Breast epithelium (tissue), 4 donors: ENCODE measurements at regions of chr15 and their contacts with region 1.

Region 1: DNA sequence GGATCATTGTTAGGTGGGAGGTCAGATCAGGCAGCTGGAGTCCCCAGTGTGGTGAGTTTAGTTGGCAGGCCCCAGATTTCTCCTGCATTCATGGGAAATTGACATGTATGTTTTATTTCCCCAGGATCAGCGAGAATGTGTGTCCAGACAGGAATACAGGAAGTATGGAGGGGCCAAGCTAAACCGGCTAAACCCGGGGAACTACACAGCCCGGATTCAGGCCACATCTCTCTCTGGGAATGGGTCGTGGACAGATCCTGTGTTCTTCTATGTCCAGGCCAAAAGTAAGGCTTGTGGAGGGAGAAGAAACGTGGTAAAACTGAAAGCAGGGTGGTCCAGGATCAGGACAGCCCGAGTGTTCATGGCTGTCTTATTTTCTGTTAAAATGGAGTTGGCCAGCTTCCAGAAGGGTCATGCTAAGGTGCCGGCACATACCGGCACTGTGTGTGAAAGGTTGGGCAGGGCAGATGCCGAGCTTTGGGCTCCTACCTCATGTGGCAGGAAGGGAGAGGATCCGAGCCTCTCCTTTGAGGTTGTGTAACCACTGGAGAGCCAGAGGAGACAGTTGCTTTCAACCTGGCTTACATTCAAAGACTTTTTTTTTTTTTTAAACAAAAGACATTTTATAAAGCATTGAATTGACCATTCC is 83.1 kb downstream of the PGPEP1L start:
- DNase-seq: no peak
- H3K4me3 ChIP-seq: no peak overlapping the region
- H3K27ac ChIP-seq: peak overlapping the region; percentile 74 to 75
- H3K4me1 ChIP-seq: no peaks in the 10 kb centered on the region
- H3K27me3 ChIP-seq: no peaks in the 10 kb centered on the region
- CTCF ChIP-seq: no peak
- POLR2A ChIP-seq: no peak

Region 2: DNA sequence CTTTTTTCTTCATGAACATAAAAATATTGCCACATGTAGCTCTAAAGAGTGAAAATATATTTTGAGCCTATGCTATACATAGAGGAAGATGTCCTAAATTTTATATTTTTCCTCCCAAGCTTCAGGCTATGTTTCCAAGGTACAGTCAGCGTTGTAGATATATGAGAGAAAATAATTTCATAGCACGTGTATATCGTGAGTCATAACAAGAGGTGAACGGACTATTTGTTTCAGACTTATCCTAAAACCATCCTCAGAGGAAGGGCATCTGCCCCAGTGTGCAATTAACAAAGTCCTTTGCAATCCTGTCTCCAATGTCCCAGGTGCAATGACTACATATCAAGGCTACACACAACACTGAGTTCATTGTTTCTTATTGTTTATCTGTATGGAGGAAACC is 1141.3 kb before region 1 on chr15:
- intact Hi-C with region 1: no loop called
- DNase-seq: no peak
- H3K4me3 ChIP-seq: no peak overlapping the region
- H3K27ac ChIP-seq: no peak overlapping the region
- H3K4me1 ChIP-seq: no peaks in the 10 kb centered on the region
- H3K27me3 ChIP-seq: no peaks in the 10 kb centered on the region
- CTCF ChIP-seq: no peak
- POLR2A ChIP-seq: no peak

Region 3: GRCh38 chr15:98003991-98004390 is 920.5 kb before region 1 on chr15:
- intact Hi-C with region 1: no loop called
- DNase-seq: no peak
- H3K4me3 ChIP-seq: no peak overlapping the region
- H3K27ac ChIP-seq: no peak overlapping the region
- H3K4me1 ChIP-seq: no peaks in the 10 kb centered on the region
- H3K27me3 ChIP-seq: no peaks in the 10 kb centered on the region
- CTCF ChIP-seq: no peak
- POLR2A ChIP-seq: no peak

Region 4: GRCh38 chr15:98455965-98456364 is 468.6 kb before region 1 on chr15:
- intact Hi-C with region 1: loop called (anchors 5 kb)
- DNase-seq: no peak
- H3K4me3 ChIP-seq: no peak overlapping the region
- H3K27ac ChIP-seq: no peak overlapping the region
- H3K4me1 ChIP-seq: no peaks in the 10 kb centered on the region
- H3K27me3 ChIP-seq: no peaks in the 10 kb centered on the region
- CTCF ChIP-seq: no peak
- POLR2A ChIP-seq: no peak